K562 (cell line): ENCODE measurements at regions of chr7 and their contacts with region 1.

Region 1: DNA sequence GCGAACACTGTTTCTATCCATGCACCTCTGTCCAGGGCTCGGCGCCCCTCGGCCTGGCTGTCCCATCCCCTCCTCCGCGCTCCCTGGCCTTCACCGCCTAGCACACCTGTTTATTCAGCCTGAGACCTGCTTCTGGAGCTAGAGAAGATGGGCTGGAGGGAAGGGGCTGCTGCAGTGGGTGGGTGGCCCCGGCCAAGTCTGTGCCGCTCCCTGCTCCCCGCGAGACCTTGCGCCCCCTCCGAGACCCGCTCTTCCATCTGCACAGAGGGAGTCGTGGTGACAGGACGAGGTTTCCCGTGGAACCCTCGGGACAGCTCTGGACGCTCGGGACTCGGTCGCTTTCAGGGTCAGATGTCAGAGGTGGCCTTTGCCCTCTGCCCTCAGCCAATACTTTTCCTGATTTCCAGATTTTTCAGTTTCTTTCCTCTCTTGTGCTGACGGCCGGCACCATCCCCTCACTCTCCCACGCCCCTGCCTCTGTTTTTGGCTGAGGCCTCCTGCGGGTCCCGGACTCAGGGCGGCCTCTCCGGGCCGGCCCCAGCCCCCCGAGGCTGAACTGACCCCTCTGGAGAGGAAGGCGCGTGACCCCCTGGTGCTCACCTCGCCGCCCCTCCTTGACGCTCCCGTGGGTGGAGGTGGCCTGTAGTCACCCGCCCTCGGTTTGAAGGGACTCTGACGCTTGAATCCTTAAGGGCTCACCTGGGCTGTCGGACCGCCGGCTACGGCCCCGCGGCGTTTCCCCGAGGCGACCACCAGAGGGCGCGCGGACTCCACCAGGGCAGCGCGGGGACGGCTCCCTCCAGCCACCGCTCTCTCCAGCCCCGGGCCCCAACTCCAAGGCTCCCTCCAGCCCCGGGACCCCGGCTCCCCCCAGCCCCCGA is 15.6 kb downstream of the SHH start:
- DNase-seq: peak; percentile 80 to 91 (median 91)
- ATAC-seq: peak; percentile 97
- H3K4me3 ChIP-seq: no peak overlapping the region
- H3K27ac ChIP-seq: no peak overlapping the region
- H3K4me1 ChIP-seq: peaks cover 0 to 16% of the 10 kb centered on the region in 2 experiments; a peak in 2 of 5 replicates
- H3K27me3 ChIP-seq: peaks cover 38 to 59% of the 10 kb centered on the region in 2 experiments
- CTCF ChIP-seq: peak; percentile 81 to 93 (median 83)
- EP300 ChIP-seq: no peak
- POLR2A ChIP-seq: no peak
- RAD21 ChIP-seq: peak; percentile 71 to 88

Region 2: GRCh38 chr7:157474689-157475088 is 1678.1 kb after region 1 on chr7:
- CTCF ChIA-PET with region 1: no interaction called
- POLR2A ChIA-PET with region 1: no interaction called
- in situ Hi-C with region 1: no loop called
- intact Hi-C with region 1: loop called (anchors 5 kb)
- DNase-seq: peak; percentile 79 to 85 (median 82)
- ATAC-seq: peak; percentile 95
- H3K4me3 ChIP-seq: no peak overlapping the region
- H3K27ac ChIP-seq: no peak overlapping the region
- H3K4me1 ChIP-seq: peaks cover 0 to 17% of the 10 kb centered on the region in 2 experiments; a peak in 2 of 5 replicates
- H3K27me3 ChIP-seq: peaks cover 25 to 46% of the 10 kb centered on the region in 2 experiments
- CTCF ChIP-seq: peak; percentile 69 to 84 (median 79)
- EP300 ChIP-seq: no peak
- POLR2A ChIP-seq: no peak
- RAD21 ChIP-seq: peak; percentile 17 to 62; a peak in 2 of 4 replicates